Dorsolateral prefrontal cortex (tissue), 120 donors: ENCODE measurements at regions of chr5 and their contacts with region 1.

Region 1: GRCh38 chr5:63655043-63655442 is 307.2 kb downstream of the HTR1A start:
- DNase-seq: no peak
- H3K4me3 ChIP-seq: no peak overlapping the region
- H3K27ac ChIP-seq: no peak overlapping the region
- H3K27me3 ChIP-seq: no peaks in the 10 kb centered on the region
- CTCF ChIP-seq: no peak

Region 2: GRCh38 chr5:63602971-63603370 is 52.1 kb before region 1 on chr5:
- intact Hi-C with region 1: loop called in 1 of 2 experiments (anchors 2 kb)
- DNase-seq: peak in 5 of 10 donors; percentile 9 to 59 (median 45)
- H3K4me3 ChIP-seq: no peak overlapping the region
- H3K27ac ChIP-seq: peak overlapping the region in 3 of 59 donors; percentile 62 to 74 (median 72)
- H3K27me3 ChIP-seq: no peaks in the 10 kb centered on the region
- CTCF ChIP-seq: no peak

Region 3: DNA sequence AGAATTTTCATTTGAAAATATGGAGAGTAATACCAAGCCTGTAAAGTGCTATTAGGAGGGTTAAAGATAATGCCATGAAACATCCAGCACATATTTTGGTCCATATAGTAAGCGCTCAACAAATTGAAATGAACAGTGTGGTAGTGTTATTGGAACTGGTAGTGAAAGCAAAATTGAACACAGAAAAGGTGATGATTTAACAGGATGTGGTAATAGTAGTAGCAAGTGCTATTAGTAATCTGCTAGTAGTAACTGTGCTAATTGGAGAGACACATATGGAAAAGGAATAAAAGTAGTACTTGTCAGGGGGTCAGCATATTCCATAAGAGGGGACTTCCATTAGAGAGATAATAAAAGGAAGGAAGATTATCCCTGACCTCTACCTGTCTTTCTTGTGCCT is 119.9 kb after region 1 on chr5:
- intact Hi-C with region 1: no loop called
- DNase-seq: no peak
- H3K4me3 ChIP-seq: no peak overlapping the region
- H3K27ac ChIP-seq: no peak overlapping the region
- H3K27me3 ChIP-seq: no peaks in the 10 kb centered on the region
- CTCF ChIP-seq: no peak